RWPE1 (cell line): ENCODE measurements at regions of chr20 and their contacts with region 1.

Region 1: GRCh38 chr20:32902456-32903420 is 44.0 kb downstream of the EFCAB8 start:
- DNase-seq: peak; percentile 83
- H3K27ac ChIP-seq: no peak overlapping the region
- CTCF ChIP-seq: peak; percentile 99

Region 2: DNA sequence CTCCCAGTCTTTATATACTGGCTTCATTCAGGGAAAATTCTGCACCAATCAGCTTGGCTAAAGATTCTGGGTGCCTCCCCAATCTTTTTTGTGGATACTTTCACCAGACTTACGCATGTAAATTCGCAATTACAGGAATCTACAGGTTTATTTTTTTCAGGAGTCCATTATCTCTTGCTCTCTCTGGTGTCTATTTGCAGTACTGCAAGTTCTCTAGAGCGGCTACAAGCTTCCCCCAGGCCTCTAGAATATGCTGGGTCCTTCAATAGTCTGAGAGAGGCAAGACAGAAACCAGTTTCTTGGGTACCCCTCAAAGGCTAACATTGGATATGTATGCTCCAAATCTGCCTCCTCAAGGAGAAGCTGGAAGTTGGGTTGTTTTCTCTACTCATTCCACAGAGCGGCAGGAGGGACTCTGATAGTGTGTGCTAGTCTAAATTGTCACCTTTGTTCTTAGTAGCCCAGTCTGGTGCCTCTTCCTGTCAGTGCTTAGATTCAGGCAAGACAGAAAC is 43.0 kb after region 1 on chr20:
- CTCF ChIA-PET with region 1: interaction called, 10 read pairs
- POLR2A ChIA-PET with region 1: no interaction called
- DNase-seq: peak; percentile 63
- H3K27ac ChIP-seq: no peak overlapping the region
- CTCF ChIP-seq: peak; percentile 63